ENCODE measurements at regions of chr19 and their contacts with region 1.

Region 1: GRCh38 chr19:19554074-19555023 is 16.3 kb downstream of the CILP2 start:
- DNase-seq: peak; percentile 67
- H3K4me3 Mint-ChIP-seq: no peak overlapping the region
- H3K27ac Mint-ChIP-seq: no peak overlapping the region
- H3K4me1 Mint-ChIP-seq: peaks cover 10% of the 10 kb centered on the region
- H3K27me3 Mint-ChIP-seq: no peaks in the 10 kb centered on the region

Region 2: DNA sequence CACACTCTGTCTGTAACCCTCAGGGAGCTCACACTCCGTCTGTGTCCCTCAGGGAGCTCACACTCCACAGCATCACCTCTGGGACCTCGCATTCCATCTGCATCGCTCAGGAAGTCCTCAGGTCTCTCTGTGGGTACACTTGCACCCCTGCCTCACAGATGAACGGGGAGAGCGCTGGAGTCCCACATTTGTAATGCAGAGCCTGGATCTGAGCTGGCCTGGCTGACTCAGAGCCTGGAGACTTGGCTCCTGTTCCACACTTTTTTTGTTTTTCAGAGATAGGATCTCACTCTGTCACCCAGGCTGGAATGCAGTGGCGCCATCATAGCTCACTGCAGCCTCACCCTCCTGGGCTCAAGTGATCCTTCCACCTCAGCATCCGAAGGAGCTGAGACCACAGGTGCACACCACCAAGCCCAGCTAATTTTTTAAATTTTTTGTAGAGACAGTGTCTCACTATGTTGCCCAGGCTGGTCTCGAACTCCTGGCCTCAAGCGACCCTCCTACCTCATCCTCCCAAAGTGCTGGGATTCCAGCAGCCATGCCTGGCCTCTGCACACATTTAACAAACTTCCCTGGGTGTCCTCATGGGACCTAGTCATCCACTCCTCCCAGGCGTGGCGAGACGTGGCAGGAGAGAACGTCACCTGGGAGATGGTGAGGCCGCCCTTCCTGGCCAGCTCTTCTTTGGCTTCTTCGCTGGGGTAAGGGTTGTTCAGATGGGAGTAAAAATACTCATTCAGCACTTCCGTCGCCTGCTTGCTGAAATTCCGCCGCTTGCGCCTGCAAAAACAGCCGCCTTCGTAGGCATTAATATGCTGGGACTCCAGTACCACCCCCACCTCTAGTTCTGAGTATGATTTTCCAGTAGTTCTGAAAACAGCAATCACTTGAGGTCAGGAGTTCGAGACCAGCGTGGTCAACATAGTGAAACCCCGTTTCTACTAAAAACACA is 14.7 kb after region 1 on chr19:
- CTCF ChIA-PET with region 1: interaction called, 22 read pairs
- POLR2A ChIA-PET with region 1: interaction called, 7 read pairs
- DNase-seq: no peak
- H3K4me3 Mint-ChIP-seq: no peak overlapping the region
- H3K27ac Mint-ChIP-seq: peak overlapping the region; percentile 33
- H3K4me1 Mint-ChIP-seq: peaks cover 5% of the 10 kb centered on the region
- H3K27me3 Mint-ChIP-seq: no peaks in the 10 kb centered on the region

Region 3: DNA sequence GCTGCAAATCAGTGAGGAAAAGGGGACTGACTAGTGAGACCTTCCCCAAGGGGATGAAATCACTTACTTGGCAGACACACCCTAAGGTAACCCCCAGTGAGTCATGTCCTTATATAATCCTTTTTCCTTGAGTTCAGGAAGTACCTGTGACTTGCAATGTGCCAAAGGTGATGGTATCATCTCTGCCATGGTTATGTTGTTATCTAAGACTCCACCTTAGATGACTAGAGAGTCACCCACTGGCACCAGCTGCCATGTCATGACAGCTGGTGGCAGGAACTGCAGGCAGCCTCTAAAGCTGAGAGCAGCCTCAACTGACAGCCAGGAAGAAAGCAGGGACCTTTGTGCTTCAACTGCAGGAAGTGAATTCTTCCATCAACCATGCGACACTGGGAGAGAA is 51.7 kb after region 1 on chr19:
- CTCF ChIA-PET with region 1: interaction called, 16 read pairs
- POLR2A ChIA-PET with region 1: interaction called, 4 read pairs
- DNase-seq: peak; percentile 65
- H3K4me3 Mint-ChIP-seq: peak overlapping the region; percentile 41
- H3K27ac Mint-ChIP-seq: peak overlapping the region; percentile 98
- H3K4me1 Mint-ChIP-seq: peaks cover 76% of the 10 kb centered on the region
- H3K27me3 Mint-ChIP-seq: no peaks in the 10 kb centered on the region

Region 4: DNA sequence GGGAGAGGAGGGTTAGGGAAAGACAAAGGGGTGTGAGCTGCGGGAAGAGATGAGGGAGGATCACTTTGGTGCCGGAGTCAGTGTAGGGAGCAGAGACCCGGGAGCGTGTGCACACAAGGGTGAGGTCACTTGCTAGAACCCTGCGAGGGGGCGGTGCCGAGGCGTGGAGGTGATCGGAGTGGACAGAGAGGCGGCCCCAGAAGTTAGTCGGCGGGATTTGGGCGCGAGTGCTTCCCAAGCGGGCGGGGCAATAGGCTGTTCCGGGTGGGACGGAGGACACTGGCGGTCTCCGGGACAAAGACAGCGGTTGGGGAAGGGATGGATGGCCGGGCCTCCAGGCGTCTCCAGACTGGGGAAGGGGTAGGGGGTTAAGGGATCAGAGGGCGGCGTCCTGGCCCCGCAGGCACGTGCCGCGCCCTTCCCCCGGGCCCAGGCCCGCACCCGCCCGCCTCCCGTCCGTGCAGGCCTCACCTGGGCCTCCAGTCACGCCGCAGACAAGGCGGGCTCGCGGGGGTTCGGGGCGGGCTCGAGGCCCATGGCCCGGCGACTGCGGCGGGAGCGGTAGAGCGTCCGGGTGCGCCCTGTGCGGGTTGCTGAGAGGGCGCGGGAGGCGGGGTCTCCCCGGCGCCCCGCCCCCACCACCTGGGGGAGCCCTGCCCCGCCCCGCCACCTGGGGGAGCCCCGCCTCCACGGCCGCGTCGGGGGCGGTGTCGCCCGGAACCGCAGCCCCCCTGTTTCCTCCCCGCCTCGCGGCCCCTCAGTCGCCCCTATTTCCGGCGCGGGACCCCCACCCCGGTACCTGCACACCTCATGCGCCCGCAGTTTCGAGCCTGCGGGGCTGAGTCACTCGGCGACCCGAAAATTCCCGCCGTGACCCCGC is 73.5 kb after region 1 on chr19 and contains the start of gene LPAR2:
- CTCF ChIA-PET with region 1: interaction called, 16 read pairs
- POLR2A ChIA-PET with region 1: no interaction called
- DNase-seq: peak; percentile 74
- H3K4me3 Mint-ChIP-seq: peak within 1 kb of the TSS; percentile 83
- H3K27ac Mint-ChIP-seq: peak within 1 kb of the TSS; percentile 91
- H3K4me1 Mint-ChIP-seq: peaks cover 32% of the 10 kb centered on the region
- H3K27me3 Mint-ChIP-seq: no peaks in the 10 kb centered on the region
- total RNA-seq, gene LPAR2: 43.2 to 46.2 TPM

Region 5: DNA sequence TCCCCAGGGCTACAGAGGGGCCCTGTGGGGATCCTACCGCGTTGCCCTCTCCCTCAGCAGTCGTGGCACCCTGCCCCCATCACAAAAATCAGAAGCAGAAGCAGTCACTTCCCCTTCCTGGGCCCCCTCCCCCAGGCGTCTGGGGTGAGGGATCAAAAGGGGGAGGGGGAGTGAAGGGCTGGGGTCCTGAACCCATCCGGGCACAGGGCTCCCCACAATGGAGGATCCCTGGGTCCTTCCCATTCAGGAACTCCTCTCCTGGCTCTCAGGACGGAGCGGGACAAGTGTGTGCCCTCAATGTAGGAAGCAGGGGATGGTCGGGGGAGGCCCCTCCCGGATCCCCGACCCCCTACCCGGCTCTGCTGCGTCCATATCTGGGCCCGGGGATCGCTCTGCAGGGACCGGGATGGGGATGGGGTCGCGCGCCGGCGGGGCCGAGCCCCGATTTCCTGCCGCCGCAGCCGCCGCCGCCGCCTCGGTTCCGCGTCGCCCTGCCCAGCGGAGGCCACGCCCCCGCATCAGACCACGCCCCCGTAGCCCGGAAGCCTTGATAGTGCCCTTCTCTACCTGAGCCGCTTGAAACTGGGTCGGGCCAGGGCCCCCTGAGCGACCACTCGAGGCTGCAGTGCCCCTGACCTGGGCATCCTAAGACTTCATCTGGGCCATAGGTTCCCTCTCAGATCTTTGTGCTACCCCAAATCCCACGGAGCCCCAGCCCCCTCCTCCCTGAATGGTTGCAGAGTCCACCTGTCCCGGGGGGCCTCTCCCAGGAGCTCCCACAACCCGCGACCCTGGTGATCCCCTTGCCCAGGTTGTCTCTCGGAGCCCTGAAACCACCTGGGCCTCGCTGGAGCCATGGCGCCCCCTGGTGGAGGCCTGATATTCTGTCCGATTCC is 89.1 kb after region 1 on chr19 and contains the start of gene GMIP:
- CTCF ChIA-PET with region 1: interaction called, 12 read pairs
- POLR2A ChIA-PET with region 1: interaction called, 6 read pairs
- DNase-seq: peak; percentile 90
- H3K4me3 Mint-ChIP-seq: peak within 1 kb of the TSS; percentile 98
- H3K27ac Mint-ChIP-seq: peak within 1 kb of the TSS; percentile 96
- H3K4me1 Mint-ChIP-seq: peaks cover 16% of the 10 kb centered on the region
- H3K27me3 Mint-ChIP-seq: no peaks in the 10 kb centered on the region
- total RNA-seq, gene GMIP: 111 to 112 TPM

Measured in activated CD4-positive, alpha-beta memory T cell treated with anti-CD3 and anti-CD28 coated beads, Interleukin-2, amount 10 ng/mL, durations not matched to agents 7 days and 5 days (primary cell).